Thyroid gland (tissue), 4 donors: ENCODE measurements at regions of chr13 and their contacts with region 1.

Region 1: DNA sequence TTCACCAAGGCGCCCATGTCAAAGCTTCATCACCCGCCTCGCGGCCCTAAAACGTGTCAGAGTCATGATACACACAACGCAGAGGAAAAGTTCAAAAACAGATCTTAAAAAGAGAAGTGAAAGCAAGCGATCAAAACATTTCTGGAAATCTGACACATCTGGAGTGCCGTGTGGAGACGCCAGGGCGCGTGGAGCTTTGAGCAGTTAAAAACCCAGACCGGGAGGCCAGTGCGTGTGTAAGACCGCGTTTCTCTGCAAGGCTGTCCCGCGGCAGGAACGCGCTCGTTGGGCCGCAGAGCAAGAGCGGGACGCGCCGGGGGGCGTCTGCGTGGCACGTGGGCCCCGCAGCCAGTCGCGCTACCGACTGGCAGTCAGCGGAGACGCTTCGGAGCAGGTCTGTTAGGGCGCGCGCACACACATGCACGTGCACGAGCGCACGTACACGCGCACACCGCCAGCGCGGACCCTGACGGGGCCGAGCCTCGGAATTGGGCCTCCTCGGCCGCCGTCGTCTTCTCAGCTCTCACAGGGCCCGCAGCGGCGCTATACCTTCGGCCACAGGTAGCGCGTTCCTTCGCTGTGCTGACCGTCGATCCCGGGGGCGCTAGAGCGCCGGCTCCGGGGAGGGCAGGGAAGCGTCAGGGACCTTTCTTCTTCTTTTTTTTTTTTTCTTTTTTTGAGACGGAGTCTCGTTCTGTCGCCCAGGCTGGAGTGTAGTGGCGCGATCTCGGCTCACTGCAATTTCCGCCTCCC is 35.8 kb downstream of the RNF6 start:
- DNase-seq: peak; percentile 81 to 85
- H3K4me3 ChIP-seq: peak overlapping the region; percentile 4 to 84 (median 52)
- H3K27ac ChIP-seq: peak overlapping the region; percentile 1 to 72 (median 51)
- H3K4me1 ChIP-seq: peaks cover 0 to 7% of the 10 kb centered on the region in 2 donors
- H3K27me3 ChIP-seq: no peaks in the 10 kb centered on the region
- CTCF ChIP-seq: peak in 4 of 6 experiments; percentile 40 to 53 (median 44)
- POLR2A ChIP-seq: peak in 1 of 2 donors; percentile 53

Region 2: GRCh38 chr13:25406377-25406915 is 779.8 kb before region 1 on chr13:
- intact Hi-C with region 1: no loop called
- DNase-seq: no peak
- H3K4me3 ChIP-seq: no peak overlapping the region
- H3K27ac ChIP-seq: no peak overlapping the region
- H3K4me1 ChIP-seq: no peaks in the 10 kb centered on the region
- H3K27me3 ChIP-seq: no peaks in the 10 kb centered on the region
- CTCF ChIP-seq: no peak
- POLR2A ChIP-seq: no peak

Region 3: GRCh38 chr13:26498656-26499591 is 312.6 kb after region 1 on chr13:
- intact Hi-C with region 1: loop called (anchors 5 kb)
- DNase-seq: peak; percentile 51 to 59
- H3K4me3 ChIP-seq: no peak overlapping the region
- H3K27ac ChIP-seq: peak overlapping the region in 2 of 3 donors; percentile 8 to 26
- H3K4me1 ChIP-seq: peaks cover 0 to 7% of the 10 kb centered on the region in 2 donors
- H3K27me3 ChIP-seq: no peaks in the 10 kb centered on the region
- CTCF ChIP-seq: peak in 2 of 6 experiments; percentile 29 to 32
- POLR2A ChIP-seq: no peak